ENCODE measurements at regions of chrX and their contacts with region 1.

Region 1: GRCh38 chrX:48801280-48802088 is at the start of gene HDAC6:
- DNase-seq: peak; percentile 98
- H3K4me3 ChIP-seq: peak within 1 kb of the TSS; percentile 74
- H3K27ac ChIP-seq: peak within 1 kb of the TSS; percentile 99
- H3K4me1 ChIP-seq: no peaks in the 10 kb centered on the region
- H3K27me3 ChIP-seq: no peaks in the 10 kb centered on the region
- CTCF ChIP-seq: no peak
- total RNA-seq, gene HDAC6: 49.4 and 82.5 TPM in 2 replicates

Region 2: DNA sequence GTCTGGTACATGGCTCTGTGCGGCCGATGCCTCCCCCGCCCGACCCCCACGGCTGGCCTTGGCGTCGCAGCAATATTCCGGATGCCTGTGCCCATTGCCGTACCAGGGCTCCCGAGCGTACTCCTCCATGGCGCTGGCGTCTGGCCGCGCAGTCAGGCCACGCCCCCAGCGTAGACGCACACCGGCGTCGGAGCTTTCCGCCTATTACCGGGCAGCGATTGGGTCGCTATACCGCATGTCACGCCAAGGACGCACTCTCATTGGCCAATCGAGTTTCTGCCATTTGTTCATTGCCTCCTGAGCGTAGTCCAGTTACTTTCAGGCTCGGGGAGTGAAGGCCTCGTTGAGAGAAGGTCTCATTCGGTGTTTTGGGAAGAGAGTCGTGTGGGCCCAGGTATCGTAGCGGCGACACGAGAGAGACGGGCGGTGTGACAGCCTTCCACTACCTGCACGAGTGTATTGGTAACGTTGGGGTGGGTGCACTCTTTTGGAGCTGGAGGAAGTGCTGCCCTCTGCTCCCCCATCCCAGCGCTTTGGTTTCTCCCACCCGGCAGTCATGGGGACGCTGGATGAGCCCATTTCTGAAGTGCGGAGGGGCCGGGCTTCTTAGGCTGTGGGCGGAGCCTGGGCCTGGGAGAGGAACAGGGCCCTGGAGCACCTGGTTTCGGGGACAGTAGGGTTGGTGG is 96.3 kb after region 1 on chrX and contains the starts of genes PQBP1 and TIMM17B:
- CTCF ChIA-PET with region 1: no interaction called
- POLR2A ChIA-PET with region 1: no interaction called
- intact Hi-C with region 1: loop called (anchors 10 kb)
- DNase-seq: peak; percentile 95
- H3K4me3 ChIP-seq: peak within 1 kb of the TSS; percentile 70
- H3K27ac ChIP-seq: peak within 1 kb of the TSS; percentile 94
- H3K4me1 ChIP-seq: peaks cover 5% of the 10 kb centered on the region
- H3K27me3 ChIP-seq: no peaks in the 10 kb centered on the region
- CTCF ChIP-seq: no peak
- total RNA-seq, gene PQBP1: 113 and 133 TPM in 2 replicates
- total RNA-seq, gene TIMM17B: 60.8 and 72.4 TPM in 2 replicates

Region 3: GRCh38 chrX:48945516-48946348 is 144.2 kb after region 1 on chrX:
- CTCF ChIA-PET with region 1: no interaction called
- POLR2A ChIA-PET with region 1: no interaction called
- intact Hi-C with region 1: loop called (anchors 10 kb)
- DNase-seq: peak; percentile 43
- H3K4me3 ChIP-seq: no peak overlapping the region
- H3K27ac ChIP-seq: no peak overlapping the region
- H3K4me1 ChIP-seq: no peaks in the 10 kb centered on the region
- H3K27me3 ChIP-seq: no peaks in the 10 kb centered on the region
- CTCF ChIP-seq: peak; percentile 84

Measured in A673 (cell line).